Endothelial cell of umbilical vein (primary cell): ENCODE measurements at regions of chr3 and their contacts with region 1.

Region 1: GRCh38 chr3:130276203-130276803 is 69.2 kb upstream of the COL6A5 start:
- DNase-seq: peak; percentile 60
- H3K4me3 ChIP-seq: no peak overlapping the region
- H3K27ac ChIP-seq: no peak overlapping the region
- H3K4me1 ChIP-seq: no peaks in the 10 kb centered on the region
- H3K27me3 ChIP-seq: peaks cover 8 to 15% of the 10 kb centered on the region in 2 experiments
- CTCF ChIP-seq: peak; percentile 76 to 79
- POLR2A ChIP-seq: no peak

Region 2: DNA sequence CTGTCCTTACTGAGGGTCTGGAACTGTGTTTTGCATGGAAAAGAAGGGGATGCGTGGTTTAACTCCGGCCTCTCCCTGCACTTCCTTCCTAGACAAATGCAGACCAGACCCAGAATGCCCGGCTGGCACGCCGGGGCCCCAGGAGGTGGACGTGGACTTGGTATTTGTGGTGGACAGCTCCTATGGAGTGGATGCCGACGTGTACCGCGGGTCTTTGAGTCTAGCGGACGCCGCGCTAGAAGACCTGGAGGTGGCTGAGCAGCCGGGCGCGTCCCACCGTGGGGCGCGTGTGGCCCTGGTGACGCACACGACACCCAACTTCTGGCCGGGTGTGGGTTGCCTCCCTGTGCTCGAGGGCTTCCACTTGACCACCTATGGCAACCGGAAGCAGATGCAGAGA is 12.6 kb before region 1 on chr3:
- CTCF ChIA-PET with region 1: interaction called, 18 read pairs
- POLR2A ChIA-PET with region 1: no interaction called
- dilution Hi-C with region 1: no loop called
- intact Hi-C with region 1: no loop called
- DNase-seq: no peak
- H3K4me3 ChIP-seq: no peak overlapping the region
- H3K27ac ChIP-seq: no peak overlapping the region
- H3K4me1 ChIP-seq: peaks cover 16% of the 10 kb centered on the region
- H3K27me3 ChIP-seq: peaks cover 8 to 9% of the 10 kb centered on the region in 2 experiments
- CTCF ChIP-seq: no peak
- POLR2A ChIP-seq: no peak

Region 3: DNA sequence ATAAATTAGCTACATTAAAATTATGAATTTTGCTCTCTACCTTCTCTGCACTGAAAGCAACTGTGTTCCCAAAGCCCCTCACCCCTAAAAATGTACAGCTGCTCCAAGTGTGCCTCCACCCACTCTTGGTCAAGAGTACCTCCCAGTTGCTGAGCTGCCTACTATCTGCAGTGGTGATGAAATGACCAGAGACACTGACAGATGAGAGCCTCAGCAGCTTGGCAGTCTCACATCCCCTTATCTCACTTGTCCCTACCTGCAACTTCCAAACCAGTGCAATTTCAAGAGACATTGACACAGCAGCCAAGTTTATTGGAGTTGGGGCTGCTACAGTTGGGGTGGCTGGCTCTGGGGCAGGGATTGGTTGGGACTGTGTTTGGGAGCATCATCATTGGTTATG is 16.9 kb after region 1 on chr3:
- CTCF ChIA-PET with region 1: interaction called, 13 read pairs
- POLR2A ChIA-PET with region 1: no interaction called
- dilution Hi-C with region 1: no loop called
- intact Hi-C with region 1: no loop called
- DNase-seq: no peak
- H3K4me3 ChIP-seq: no peak overlapping the region
- H3K27ac ChIP-seq: no peak overlapping the region
- H3K4me1 ChIP-seq: no peaks in the 10 kb centered on the region
- H3K27me3 ChIP-seq: no peaks in the 10 kb centered on the region
- CTCF ChIP-seq: no peak
- POLR2A ChIP-seq: no peak

Region 4: DNA sequence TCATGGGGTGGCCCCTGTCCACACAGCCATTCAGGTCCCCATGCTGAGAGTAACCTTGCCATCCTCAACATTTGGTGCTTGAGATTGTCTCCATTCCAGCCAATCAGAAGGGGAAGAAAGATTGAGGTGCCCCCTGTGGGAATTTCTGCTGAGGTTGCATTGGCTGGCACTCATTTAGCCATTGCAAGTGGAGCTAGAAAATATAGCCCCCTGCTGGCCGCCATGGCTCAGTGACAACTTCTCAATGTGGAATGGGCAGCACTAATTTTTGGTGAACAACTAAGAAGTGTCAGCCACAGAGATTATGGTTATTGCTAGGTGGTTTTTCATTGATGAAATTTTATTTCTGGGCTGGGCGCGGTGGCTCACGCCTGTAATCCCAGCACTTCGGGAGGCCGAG is 262.7 kb after region 1 on chr3:
- CTCF ChIA-PET with region 1: interaction called, 80 read pairs
- POLR2A ChIA-PET with region 1: no interaction called
- dilution Hi-C with region 1: no loop called
- intact Hi-C with region 1: loop called (anchors 1 kb)
- DNase-seq: peak; percentile 50
- H3K4me3 ChIP-seq: no peak overlapping the region
- H3K27ac ChIP-seq: no peak overlapping the region
- H3K4me1 ChIP-seq: no peaks in the 10 kb centered on the region
- H3K27me3 ChIP-seq: peaks cover 0 to 1% of the 10 kb centered on the region in 2 experiments
- CTCF ChIP-seq: peak; percentile 62 to 76
- POLR2A ChIP-seq: no peak

Region 5: DNA sequence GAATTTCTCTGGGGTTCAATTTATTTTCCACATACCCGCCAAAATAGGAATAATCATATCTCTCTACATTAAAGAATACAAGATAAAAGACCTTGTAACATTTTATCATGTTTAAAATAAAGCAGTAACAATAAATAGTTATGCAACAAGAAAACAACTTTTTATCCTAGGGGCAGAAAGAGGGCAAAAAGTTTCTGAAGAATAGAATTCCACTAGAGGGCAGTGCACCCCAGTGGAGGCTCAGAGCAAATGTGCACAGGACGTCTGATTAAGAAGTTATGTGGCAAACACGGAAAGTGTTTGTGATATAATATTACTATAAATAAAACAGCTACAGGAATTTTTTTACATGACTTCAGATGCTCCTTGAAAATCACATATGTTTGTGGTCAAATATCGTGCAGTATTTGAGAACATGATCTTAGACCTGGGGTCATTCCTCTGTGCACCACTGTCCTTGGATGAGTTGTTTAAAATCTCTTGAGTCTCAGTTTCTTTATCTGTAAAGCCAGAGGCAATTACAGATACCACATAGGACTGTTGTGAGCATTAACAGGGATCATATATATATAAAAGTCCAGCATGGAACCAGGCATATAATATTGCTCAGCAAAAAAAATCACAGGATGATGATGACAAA is 483.5 kb after region 1 on chr3:
- CTCF ChIA-PET with region 1: interaction called, 3 read pairs
- POLR2A ChIA-PET with region 1: no interaction called
- dilution Hi-C with region 1: no loop called
- intact Hi-C with region 1: loop called (anchors 10 kb)
- DNase-seq: peak; percentile 61
- H3K4me3 ChIP-seq: no peak overlapping the region
- H3K27ac ChIP-seq: no peak overlapping the region
- H3K4me1 ChIP-seq: no peaks in the 10 kb centered on the region
- H3K27me3 ChIP-seq: no peaks in the 10 kb centered on the region
- CTCF ChIP-seq: peak; percentile 52 to 67
- POLR2A ChIP-seq: no peak